ENCODE measurements at regions of chr6 and their contacts with region 1.

Region 1: GRCh38 chr6:142207265-142207877 is 60.3 kb downstream of the VTA1 start:
- DNase-seq: peak in 1 of 2 donors; percentile 22
- ATAC-seq: peak; percentile 56 to 69
- H3K4me3 ChIP-seq: no peak overlapping the region
- H3K27ac ChIP-seq: no peak overlapping the region
- H3K4me1 ChIP-seq: peaks cover 0 to 4% of the 10 kb centered on the region in 2 donors
- H3K27me3 ChIP-seq: no peaks in the 10 kb centered on the region
- CTCF ChIP-seq: peak; percentile 50 to 72 (median 66)
- POLR2A ChIP-seq: no peak

Region 2: DNA sequence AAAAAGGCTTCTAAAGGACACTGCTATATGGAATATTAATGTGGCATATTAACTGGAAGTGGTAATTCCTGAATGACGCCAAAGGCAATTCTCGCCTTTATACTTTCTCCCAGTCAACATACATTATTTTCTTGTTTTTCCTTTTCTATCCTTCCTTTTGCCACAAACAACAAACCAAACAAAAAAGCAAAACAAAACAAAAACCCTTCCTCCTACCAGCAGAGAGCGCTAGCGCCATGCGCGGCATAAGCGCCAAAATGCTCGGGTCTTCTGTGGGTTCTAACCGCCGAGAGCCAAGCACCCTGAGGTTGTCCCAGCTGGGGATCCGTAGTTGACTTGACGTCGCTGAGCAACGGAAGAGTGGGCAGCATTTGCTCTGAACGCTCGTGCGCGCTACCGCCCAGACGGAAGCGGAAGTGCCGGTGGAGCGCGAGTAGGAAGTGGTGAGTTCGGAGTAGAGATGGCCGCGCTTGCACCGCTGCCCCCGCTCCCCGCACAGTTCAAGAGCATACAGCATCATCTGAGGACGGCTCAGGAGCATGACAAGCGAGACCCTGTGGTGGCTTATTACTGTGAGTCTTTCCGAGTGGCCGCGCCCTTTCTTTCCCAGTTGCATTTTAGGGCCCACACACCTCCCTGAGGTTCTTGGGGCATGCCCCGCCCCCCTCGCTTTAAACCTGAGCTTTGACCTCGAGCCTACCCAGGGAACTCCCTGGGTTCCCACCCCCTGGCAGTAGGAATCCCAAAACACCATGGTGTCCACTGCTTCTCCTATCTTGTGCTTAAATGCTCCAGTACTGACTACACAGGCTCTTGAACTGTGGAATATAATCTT is 60.3 kb before region 1 on chr6 and contains the starts of genes NMBR and VTA1:
- in situ Hi-C with region 1: loop called in 2 of 4 experiments (anchors 5 to 10 kb)
- intact Hi-C with region 1: loop called (anchors 1 kb)
- DNase-seq: peak; percentile 96 to 97
- ATAC-seq: peak; percentile 99
- H3K4me3 ChIP-seq: peak within 1 kb of the TSS; percentile 80 to 85 (median 83)
- H3K27ac ChIP-seq: peak within 1 kb of the TSS; percentile 55 to 79 (median 70)
- H3K4me1 ChIP-seq: peaks cover 23 to 29% of the 10 kb centered on the region in 2 donors
- H3K27me3 ChIP-seq: no peaks in the 10 kb centered on the region
- CTCF ChIP-seq: peak; percentile 79 to 95 (median 88)
- POLR2A ChIP-seq: peak; percentile 10 to 39
- total RNA-seq, gene NMBR: 0.23 TPM in 1 of 4 donors, not detected in the others
- total RNA-seq, gene VTA1: 74.4 to 89.3 (median 77.3) TPM